Common myeloid progenitor, CD34-positive (primary cell): ENCODE measurements at regions of chr13 and their contacts with region 1.

Region 1: DNA sequence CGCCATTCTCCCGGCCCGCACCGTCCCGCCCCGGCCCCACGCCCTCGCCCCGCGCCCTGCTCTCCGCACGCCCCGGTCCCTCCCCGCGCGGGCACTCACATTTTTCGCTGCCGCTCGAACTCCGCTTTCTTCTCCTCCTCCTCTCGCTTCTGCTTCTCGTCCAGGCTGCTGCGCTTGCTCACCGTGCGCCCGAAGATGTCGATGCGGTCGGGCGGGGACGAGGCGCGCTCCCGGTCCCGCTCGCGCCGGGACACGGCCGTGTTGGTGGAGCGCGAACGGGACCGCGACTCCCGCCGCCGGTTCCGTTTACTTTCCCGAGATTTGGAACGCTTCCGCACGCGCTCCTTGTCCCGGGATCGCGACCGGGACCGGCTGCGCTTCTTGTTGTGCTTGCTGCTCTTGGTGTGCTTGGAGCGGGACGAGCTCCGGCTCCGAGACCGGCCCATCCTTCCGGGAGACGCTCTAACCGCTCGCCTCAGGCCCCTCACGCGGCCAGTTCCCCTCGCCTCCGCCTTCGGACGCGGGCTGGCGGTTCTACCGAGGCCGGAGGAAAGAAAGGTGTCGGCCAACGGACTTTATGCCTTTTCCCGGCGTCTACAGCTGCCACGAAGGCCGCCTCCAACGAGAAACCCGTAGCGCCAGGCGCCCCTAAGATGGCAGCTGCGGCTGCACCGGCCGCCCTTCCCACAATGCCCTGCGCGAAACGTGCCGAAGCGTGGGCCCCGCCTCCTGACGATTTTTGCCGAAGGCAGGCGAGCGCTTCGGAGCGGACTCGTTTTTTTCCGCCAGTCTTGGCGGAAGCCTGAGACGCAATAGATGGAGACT is at the start of gene ARGLU1:
- DNase-seq: peak; percentile 93 to 97 (median 96)
- H3K4me3 ChIP-seq: peak within 1 kb of the TSS; percentile 83 to 97 (median 93)
- H3K27ac ChIP-seq: peak within 1 kb of the TSS; percentile 95 to 96
- H3K4me1 ChIP-seq: peaks cover 20 to 48% (median 31%) of the 10 kb centered on the region in 4 experiments
- H3K27me3 ChIP-seq: no peaks in the 10 kb centered on the region

Region 2: DNA sequence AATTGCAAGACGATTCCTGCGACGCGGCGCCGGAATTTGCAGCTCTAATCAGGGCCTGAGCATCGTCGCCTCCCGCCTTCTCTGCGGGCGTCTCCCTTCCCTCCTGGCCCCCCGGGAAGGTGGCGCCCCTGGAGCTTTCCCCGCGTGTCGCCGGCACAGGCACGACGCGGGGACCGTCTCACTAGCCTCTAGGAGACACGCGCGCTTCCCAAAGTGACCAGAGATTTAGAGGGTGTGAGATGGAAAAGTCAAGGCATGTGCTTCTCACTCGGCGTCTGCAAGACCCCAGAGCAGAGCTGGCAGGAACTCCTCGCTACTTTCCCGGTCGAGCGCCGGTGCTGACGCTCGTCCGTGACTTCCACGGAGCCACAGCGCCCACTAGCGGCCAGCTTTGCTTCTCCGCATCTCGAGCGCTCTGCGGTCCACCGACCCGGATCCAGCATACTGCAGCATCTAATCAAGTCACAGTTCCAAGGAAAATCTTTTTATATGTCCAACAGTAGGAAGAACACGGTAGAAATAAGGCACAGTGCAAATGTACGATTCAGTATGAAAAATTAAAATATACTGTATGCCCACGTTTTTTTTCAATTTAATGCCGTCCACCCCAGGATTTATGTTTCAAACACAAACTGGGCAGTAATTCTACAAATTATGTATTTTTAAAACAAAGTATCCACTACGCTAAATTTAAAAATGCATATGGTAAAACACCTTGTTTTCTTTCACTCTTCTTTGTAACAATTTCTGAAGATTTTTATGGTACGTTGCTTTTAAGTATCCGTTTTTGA is 31.2 kb before region 1 on chr13:
- CTCF ChIA-PET with region 1: interaction called, 13 read pairs
- POLR2A ChIA-PET with region 1: no interaction called
- DNase-seq: peak; percentile 84 to 91 (median 88)
- H3K4me3 ChIP-seq: peak overlapping the region; percentile 56 to 80 (median 66)
- H3K27ac ChIP-seq: no peak overlapping the region
- H3K4me1 ChIP-seq: peaks cover 1 to 37% (median 33%) of the 10 kb centered on the region in 4 experiments
- H3K27me3 ChIP-seq: peaks cover 0 to 35% (median 20%) of the 10 kb centered on the region in 5 experiments